Ovary (tissue), 10 donors: ENCODE measurements at regions of chr7 and their contacts with region 1.

Region 1: DNA sequence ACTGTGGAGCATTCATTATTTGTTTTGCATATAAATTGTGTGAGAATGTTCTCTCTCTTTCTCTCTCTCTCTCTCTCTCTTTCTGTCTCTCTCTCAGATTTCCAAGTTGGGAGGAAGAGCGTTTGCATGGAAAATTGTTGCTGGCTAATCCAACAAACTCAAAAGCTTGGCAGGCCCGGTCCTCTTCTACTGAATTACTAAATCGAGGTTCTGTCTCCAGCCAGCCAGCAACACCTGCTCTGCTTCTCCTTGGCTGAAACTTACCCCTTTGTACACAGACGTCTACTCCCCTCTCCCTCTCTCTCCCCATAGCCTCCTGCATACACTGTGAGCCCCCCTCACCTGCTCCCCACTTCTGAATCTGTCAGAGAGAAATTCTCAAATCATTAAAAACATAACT is 996.4 kb upstream of the AUTS2 start:
- DNase-seq: no peak
- H3K4me3 ChIP-seq: no peak overlapping the region
- H3K27ac ChIP-seq: no peak overlapping the region
- H3K4me1 ChIP-seq: no peaks in the 10 kb centered on the region
- H3K27me3 ChIP-seq: no peaks in the 10 kb centered on the region
- CTCF ChIP-seq: no peak
- EP300 ChIP-seq: no peak
- POLR2A ChIP-seq: no peak

Region 2: GRCh38 chr7:68547181-68547580 is 54.6 kb before region 1 on chr7:
- intact Hi-C with region 1: loop called in 1 of 4 experiments (anchors 1 kb)
- DNase-seq: no peak
- H3K4me3 ChIP-seq: no peak overlapping the region
- H3K27ac ChIP-seq: no peak overlapping the region
- H3K4me1 ChIP-seq: no peaks in the 10 kb centered on the region
- H3K27me3 ChIP-seq: no peaks in the 10 kb centered on the region
- CTCF ChIP-seq: no peak
- EP300 ChIP-seq: no peak
- POLR2A ChIP-seq: no peak